Activated CD4-positive, alpha-beta memory T cell treated with anti-CD3 and anti-CD28 coated beads, Interleukin-2, amount 10 ng/mL, durations not matched to agents 7 days and 5 days (primary cell): ENCODE measurements at regions of chr1 and their contacts with region 1.

Region 1: DNA sequence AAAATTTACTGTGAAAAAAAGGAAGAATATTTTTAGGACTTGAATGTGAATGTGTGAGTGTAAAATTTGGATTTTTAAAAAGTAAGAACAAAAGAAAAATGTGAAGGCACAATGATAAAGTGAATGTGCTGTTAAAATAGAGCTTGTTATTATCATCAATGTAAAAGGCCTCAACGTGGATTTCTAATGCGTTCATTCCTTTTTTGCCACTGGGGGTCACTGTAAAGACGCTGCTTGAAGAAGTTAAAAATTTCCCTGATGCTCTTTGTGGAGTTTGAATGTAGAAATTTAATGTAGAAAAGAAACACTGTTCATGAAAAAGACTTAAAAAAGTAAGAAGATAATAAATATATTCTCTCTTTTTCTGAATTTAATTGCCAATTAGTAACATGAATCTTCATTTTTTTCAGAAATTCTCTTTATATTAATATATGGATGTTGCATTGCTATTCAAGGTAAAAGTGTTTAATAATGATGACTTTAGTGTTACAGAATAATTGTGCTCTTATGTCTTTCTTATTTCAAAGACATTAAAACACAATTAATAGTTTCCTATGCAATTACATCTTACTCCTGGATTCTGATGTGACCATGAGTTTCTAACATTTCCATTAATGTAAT is 161.5 kb downstream of the DNM3 start:
- DNase-seq: no peak
- H3K4me3 Mint-ChIP-seq: no peak overlapping the region
- H3K27ac Mint-ChIP-seq: no peak overlapping the region
- H3K4me1 Mint-ChIP-seq: no peaks in the 10 kb centered on the region
- H3K27me3 Mint-ChIP-seq: no peaks in the 10 kb centered on the region

Region 2: DNA sequence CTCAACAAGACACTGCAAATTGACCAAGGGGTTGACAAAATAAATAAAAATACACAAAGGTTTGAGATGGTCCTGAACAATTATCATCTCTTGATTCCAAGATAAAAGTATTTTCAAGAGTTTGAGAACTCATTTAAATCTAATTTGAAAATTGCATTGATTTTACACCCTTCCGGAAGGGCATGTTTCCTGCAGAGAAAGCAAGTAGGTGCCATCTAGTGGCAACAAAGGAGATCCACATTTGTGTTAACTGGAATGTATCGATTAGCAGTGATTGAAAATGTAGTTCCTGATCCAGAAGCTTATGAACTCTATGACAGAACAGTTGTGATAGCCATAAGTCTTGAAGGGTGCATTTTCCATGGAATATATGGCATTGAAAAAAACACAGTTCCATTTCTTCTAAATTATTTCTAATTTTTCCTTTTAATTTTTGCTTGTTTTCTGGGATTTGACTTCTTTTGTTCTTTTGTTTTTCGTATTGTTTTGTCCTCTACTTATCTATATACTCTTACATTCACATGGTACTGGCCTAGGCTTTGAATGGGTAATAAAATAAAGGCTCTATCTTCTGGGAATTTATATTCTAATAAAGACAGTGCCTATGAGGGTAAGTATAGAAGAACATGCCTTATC is 17.9 kb before region 1 on chr1:
- CTCF ChIA-PET with region 1: interaction called, 10 read pairs
- POLR2A ChIA-PET with region 1: interaction called, 3 read pairs
- DNase-seq: no peak
- H3K4me3 Mint-ChIP-seq: no peak overlapping the region
- H3K27ac Mint-ChIP-seq: no peak overlapping the region
- H3K4me1 Mint-ChIP-seq: no peaks in the 10 kb centered on the region
- H3K27me3 Mint-ChIP-seq: peaks cover 4% of the 10 kb centered on the region

Region 3: DNA sequence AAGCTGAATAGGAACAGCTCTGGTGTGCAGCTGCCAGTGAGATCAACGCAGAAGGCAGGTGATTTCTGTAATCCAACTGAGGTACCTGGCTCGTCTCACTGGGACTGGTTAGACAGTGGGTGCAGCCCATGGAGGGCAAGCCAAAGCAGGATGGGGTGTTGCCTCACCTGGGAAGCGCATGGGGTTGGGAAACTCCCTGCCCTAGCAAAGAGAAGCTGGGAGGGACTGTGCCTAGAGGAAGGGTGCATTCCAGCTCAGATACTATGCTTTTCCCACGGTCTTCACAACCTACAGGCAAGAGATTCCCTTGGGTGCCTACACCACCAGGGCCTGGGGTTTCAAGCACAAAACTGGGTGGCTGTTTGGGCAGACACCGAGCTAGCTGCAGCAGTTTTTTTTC is 21.7 kb after region 1 on chr1:
- CTCF ChIA-PET with region 1: interaction called, 10 read pairs
- POLR2A ChIA-PET with region 1: no interaction called
- DNase-seq: no peak
- H3K4me3 Mint-ChIP-seq: no peak overlapping the region
- H3K27ac Mint-ChIP-seq: no peak overlapping the region
- H3K4me1 Mint-ChIP-seq: no peaks in the 10 kb centered on the region
- H3K27me3 Mint-ChIP-seq: peaks cover 17% of the 10 kb centered on the region

Region 4: DNA sequence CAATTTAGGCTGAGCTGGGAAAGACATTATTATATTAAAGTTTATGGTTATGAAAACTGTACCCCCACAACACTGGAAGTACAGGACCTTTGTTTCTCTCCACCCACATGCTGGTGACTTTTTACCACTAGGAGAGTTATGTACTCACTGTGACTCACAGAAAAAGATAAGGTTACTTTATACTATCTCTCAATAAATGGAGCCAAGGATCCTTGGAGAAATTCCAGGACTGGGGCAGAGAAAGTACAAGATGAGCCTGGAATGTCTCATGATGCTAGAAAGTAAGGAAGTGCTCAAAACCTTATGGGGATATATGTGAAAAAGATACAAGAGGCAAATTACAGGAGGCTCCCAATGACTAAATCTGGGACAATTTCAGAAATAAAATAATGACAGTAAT is 353.8 kb after region 1 on chr1:
- CTCF ChIA-PET with region 1: no interaction called
- POLR2A ChIA-PET with region 1: no interaction called
- DNase-seq: no peak
- H3K4me3 Mint-ChIP-seq: no peak overlapping the region
- H3K27ac Mint-ChIP-seq: no peak overlapping the region
- H3K4me1 Mint-ChIP-seq: peaks cover 60% of the 10 kb centered on the region
- H3K27me3 Mint-ChIP-seq: peaks cover 5% of the 10 kb centered on the region